ENCODE measurements at regions of chr19 and their contacts with region 1.

Region 1: DNA sequence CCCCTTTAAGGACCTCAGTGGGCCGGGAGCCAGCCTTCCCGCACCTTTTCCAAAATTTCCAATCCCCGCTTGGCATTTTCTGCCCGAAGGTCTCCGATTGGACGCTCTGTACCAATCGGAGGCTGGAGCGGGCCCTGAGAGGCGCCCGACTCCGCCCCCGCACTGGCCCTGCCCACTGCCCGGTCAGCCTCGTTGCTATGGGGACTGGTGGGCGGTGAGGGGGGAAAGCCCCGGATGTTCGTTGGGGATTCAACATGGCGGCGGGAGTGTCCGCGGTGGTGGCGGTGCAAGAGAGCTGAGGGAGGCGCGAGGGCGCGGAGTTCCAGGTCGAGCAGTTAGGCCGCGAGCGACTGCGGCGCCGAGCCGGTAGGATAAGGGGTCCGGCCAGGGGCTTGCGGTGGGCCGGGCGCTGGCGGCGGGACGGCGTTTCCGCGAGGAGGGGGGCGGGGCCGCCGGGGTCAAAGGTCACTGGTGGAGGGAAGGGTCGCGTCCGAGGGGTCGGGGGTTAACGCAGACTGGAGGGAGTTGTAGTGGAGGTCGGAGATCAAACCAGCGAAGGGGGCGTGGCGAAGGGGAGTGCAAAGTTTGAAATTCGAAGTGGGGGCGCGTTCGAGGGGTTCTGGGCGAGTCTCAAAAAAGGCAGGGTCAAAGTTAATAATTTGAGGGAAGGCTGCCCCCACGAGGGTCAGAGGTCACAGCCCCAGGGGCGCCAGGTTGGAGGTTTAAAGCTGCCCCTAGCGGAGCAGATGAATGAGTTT is at the start of gene PAK4:
- DNase-seq: peak; percentile 99
- ATAC-seq: peak; percentile 95
- H3K4me3 Mint-ChIP-seq: peak within 1 kb of the TSS; percentile 92
- H3K27ac Mint-ChIP-seq: peak within 1 kb of the TSS; percentile 94
- H3K4me1 Mint-ChIP-seq: peaks cover 32% of the 10 kb centered on the region
- H3K27me3 Mint-ChIP-seq: no peaks in the 10 kb centered on the region
- CTCF ChIP-seq: no peak
- total RNA-seq, gene PAK4: 9.8 to 11.5 TPM

Region 2: DNA sequence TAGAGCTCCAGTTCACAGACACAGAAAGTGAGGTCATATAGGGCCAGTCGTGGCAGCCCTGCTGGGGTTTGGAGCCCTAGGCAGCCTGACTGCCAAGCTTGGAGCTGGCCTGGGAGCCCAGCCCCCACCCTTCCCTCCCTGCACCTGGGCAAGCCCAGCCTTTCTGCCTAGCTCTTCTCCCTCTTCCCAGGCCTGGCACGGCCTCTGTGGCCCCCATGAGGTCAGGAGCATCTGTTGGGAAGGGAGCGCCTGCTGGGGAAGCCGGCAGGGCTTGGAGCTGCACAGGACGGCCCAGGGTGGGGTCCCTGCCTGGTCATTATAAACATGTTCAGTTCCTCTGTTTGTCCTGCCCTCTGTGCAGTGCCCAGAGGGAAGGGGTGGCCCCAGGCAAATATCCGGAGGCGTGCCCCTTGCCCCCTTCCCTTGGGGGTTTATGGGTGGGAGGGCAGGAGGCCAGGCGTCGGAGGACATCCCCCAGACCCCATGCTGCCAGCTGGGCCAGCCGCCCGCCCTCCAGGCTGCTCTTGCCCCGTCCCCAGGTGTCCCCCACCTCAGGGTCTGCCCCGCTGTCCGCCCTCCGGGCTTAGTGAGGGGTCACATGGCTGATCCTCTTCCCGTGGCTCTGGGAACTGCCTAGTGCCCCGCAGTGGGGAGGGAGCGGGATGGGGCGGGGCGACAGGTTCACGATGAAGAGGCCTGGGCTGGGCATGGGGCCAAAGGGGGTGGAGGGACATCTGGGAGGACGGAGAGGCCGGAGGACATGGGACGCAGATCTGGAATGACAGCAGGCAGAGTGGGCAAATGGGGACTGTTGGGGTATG is 41.0 kb after region 1 on chr19:
- CTCF ChIA-PET with region 1: no interaction called
- POLR2A ChIA-PET with region 1: no interaction called
- intact Hi-C with region 1: no loop called
- DNase-seq: no peak
- ATAC-seq: no peak
- H3K4me3 Mint-ChIP-seq: no peak overlapping the region
- H3K27ac Mint-ChIP-seq: no peak overlapping the region
- H3K4me1 Mint-ChIP-seq: peaks cover 7% of the 10 kb centered on the region
- H3K27me3 Mint-ChIP-seq: no peaks in the 10 kb centered on the region
- CTCF ChIP-seq: no peak

Region 3: DNA sequence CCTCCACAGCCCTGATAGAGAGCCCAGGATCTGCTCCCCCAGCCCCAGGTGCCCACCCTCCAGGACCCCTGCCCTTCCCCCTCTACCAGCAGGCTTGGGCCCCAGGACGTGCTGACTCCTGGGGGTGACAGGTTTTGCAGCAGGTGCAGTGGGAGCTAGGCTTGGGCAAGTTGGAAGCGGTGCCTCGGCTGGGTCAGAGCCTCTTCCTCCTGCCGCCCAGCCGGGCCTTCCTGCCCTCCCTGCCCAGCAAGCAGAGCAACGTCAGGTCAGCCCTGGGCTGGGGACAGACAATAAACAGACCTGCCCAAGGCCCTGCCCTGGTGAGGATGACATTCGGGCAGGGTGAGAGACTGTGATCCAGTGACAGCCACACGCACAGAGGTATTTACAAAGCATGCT is 61.8 kb after region 1 on chr19:
- CTCF ChIA-PET with region 1: interaction called, 10 read pairs
- POLR2A ChIA-PET with region 1: no interaction called
- intact Hi-C with region 1: loop called (anchors 5 kb)
- DNase-seq: no peak
- ATAC-seq: no peak
- H3K4me3 Mint-ChIP-seq: no peak overlapping the region
- H3K27ac Mint-ChIP-seq: no peak overlapping the region
- H3K4me1 Mint-ChIP-seq: no peaks in the 10 kb centered on the region
- H3K27me3 Mint-ChIP-seq: peaks cover 11% of the 10 kb centered on the region
- CTCF ChIP-seq: peak; percentile 56

Region 4: GRCh38 chr19:39328046-39328705 is 202.4 kb after region 1 on chr19:
- CTCF ChIA-PET with region 1: interaction called, 14 read pairs
- POLR2A ChIA-PET with region 1: interaction called, 3 read pairs
- intact Hi-C with region 1: loop called (anchors 10 kb)
- DNase-seq: peak; percentile 88
- ATAC-seq: peak; percentile 86
- H3K4me3 Mint-ChIP-seq: no peak overlapping the region
- H3K27ac Mint-ChIP-seq: peak overlapping the region; percentile 66
- H3K4me1 Mint-ChIP-seq: peaks cover 38% of the 10 kb centered on the region
- H3K27me3 Mint-ChIP-seq: no peaks in the 10 kb centered on the region
- CTCF ChIP-seq: peak; percentile 97

Region 5: GRCh38 chr19:39335168-39335548 is 209.4 kb after region 1 on chr19:
- CTCF ChIA-PET with region 1: interaction called, 12 read pairs
- POLR2A ChIA-PET with region 1: no interaction called
- intact Hi-C with region 1: loop called (anchors 10 kb)
- DNase-seq: peak; percentile 63
- ATAC-seq: peak; percentile 40
- H3K4me3 Mint-ChIP-seq: peak overlapping the region; percentile 97
- H3K27ac Mint-ChIP-seq: peak overlapping the region; percentile 99
- H3K4me1 Mint-ChIP-seq: peaks cover 52% of the 10 kb centered on the region
- H3K27me3 Mint-ChIP-seq: no peaks in the 10 kb centered on the region
- CTCF ChIP-seq: no peak

Region 6: GRCh38 chr19:39480337-39481228 is 354.9 kb after region 1 on chr19 and contains the start of gene TIMM50:
- CTCF ChIA-PET with region 1: no interaction called
- POLR2A ChIA-PET with region 1: no interaction called
- intact Hi-C with region 1: no loop called
- DNase-seq: peak; percentile 99
- ATAC-seq: peak; percentile 97
- H3K4me3 Mint-ChIP-seq: peak within 1 kb of the TSS; percentile 97
- H3K27ac Mint-ChIP-seq: peak within 1 kb of the TSS; percentile 93
- H3K4me1 Mint-ChIP-seq: peaks cover 28% of the 10 kb centered on the region
- H3K27me3 Mint-ChIP-seq: no peaks in the 10 kb centered on the region
- CTCF ChIP-seq: no peak
- total RNA-seq, gene TIMM50: 108 to 114 TPM